ENCODE measurements at regions of chr2 and their contacts with region 1.

Region 1: DNA sequence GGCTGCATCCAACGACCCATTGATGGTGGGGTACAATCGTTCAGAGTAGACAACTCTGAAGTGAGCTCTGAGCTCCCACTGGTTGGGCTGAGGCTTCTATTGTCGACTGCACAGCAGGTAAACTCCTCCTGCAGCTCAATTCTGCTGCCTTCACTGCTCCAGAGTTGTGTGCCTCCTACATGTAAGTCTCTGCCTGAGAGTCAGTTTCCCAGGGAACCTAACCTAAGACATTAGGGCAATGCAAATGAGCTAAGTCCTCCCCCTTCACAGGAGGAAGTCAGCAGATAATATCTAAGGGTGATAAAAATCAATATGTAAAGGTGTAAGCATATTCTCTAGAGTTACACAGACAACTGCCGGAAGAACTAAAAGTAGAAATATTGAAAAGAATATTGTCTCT is 22.5 kb upstream of the ACYP2 start:
- DNase-seq: peak; percentile 79
- H3K4me3 ChIP-seq: peak overlapping the region; percentile 62
- H3K27ac ChIP-seq: peak overlapping the region; percentile 96
- H3K4me1 ChIP-seq: peaks cover 74% of the 10 kb centered on the region
- CTCF ChIP-seq: no peak

Region 2: DNA sequence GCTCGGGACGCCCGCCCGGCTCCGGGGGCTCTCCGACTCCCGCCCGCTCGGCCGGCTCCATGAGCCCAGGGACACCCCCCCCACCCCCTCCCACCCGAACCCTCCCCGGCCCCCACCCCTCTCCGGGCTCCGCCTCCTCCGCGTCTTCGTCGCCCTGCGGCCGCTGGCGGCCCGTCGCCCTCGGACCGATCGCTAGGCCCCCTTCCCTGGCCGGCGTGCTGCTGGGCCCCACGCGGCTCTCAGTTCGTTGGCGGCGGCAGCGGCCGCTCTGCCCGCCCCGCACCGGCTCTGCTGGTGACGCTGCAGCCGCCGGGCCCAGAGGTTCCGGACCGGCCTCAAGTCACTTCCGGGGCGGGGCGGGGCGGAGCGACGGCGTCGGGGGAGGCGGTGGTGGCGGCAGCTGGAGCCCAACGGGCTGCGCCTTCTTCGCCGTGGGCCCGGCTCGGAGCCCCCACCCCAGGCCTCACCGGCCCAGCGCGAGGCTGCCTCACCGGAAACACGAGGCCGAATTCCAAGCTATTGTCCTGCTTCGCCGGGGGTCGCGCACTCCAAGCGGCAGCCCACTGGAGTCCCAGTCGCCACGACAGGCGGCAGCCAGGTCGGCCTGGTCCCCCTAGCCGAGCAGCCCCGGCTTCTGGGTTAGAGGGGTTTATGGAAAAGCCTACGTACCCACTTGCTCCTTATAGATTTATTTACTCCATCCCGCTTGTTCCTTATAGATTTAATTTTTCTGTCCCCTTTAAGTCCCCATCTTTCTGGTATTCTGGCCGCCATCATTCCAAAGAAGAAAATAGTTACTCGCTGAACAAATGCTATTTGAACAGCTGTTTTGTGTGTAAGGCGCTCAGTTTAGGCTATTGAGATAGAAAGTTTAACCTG is 122.0 kb before region 1 on chr2 and contains the start of gene PSME4:
- CTCF ChIA-PET with region 1: interaction called, 3 read pairs
- POLR2A ChIA-PET with region 1: interaction called, 10 read pairs
- intact Hi-C with region 1: no loop called
- DNase-seq: peak; percentile 91
- H3K4me3 ChIP-seq: peak within 1 kb of the TSS; percentile 96
- H3K27ac ChIP-seq: peak within 1 kb of the TSS; percentile 60
- H3K4me1 ChIP-seq: peaks cover 24% of the 10 kb centered on the region
- CTCF ChIP-seq: no peak
- total RNA-seq, gene PSME4: 38.0 and 38.8 TPM in 2 replicates

Region 3: GRCh38 chr2:54073797-54074196 is 19.1 kb before region 1 on chr2:
- CTCF ChIA-PET with region 1: no interaction called
- POLR2A ChIA-PET with region 1: interaction called, 14 read pairs
- intact Hi-C with region 1: no loop called
- DNase-seq: no peak
- H3K4me3 ChIP-seq: no peak overlapping the region
- H3K27ac ChIP-seq: no peak overlapping the region
- H3K4me1 ChIP-seq: no peaks in the 10 kb centered on the region
- CTCF ChIP-seq: no peak

Region 4: GRCh38 chr2:54570925-54571694 is 478.2 kb after region 1 on chr2:
- CTCF ChIA-PET with region 1: no interaction called
- POLR2A ChIA-PET with region 1: interaction called, 10 read pairs
- intact Hi-C with region 1: no loop called
- DNase-seq: peak; percentile 84
- H3K4me3 ChIP-seq: peak overlapping the region; percentile 51
- H3K27ac ChIP-seq: peak overlapping the region; percentile 87
- H3K4me1 ChIP-seq: peaks cover 92% of the 10 kb centered on the region
- CTCF ChIP-seq: no peak

Measured in OCI-LY7 (cell line).